CD4-positive, alpha-beta memory T cell (primary cell): ENCODE measurements at regions of chr2 and their contacts with region 1.

Region 1: GRCh38 chr2:102449370-102449974 is 23.6 kb upstream of the SLC9A4 start:
- DNase-seq: peak; percentile 44 to 63 (median 49)
- H3K4me3 ChIP-seq: no peak overlapping the region
- H3K4me3 Mint-ChIP-seq: no peak overlapping the region
- H3K27ac ChIP-seq: no peak overlapping the region
- H3K27ac Mint-ChIP-seq: no peak overlapping the region
- H3K4me1 ChIP-seq: no peaks in the 10 kb centered on the region
- H3K4me1 Mint-ChIP-seq: peaks cover 0 to 2% (median 0%) of the 10 kb centered on the region in 4 donors
- H3K27me3 ChIP-seq: no peaks in the 10 kb centered on the region
- H3K27me3 Mint-ChIP-seq: no peaks in the 10 kb centered on the region

Region 2: GRCh38 chr2:101883863-101884262 is 565.6 kb before region 1 on chr2:
- CTCF ChIA-PET with region 1: interaction called, 4 read pairs
- POLR2A ChIA-PET with region 1: no interaction called
- intact Hi-C with region 1: loop called (anchors 2 kb)
- DNase-seq: peak in 4 of 5 donors; percentile 25 to 37 (median 32)
- H3K4me3 ChIP-seq: no peak overlapping the region
- H3K4me3 Mint-ChIP-seq: no peak overlapping the region
- H3K27ac ChIP-seq: no peak overlapping the region
- H3K27ac Mint-ChIP-seq: peak overlapping the region in 3 of 7 donors; percentile 1 to 34 (median 22)
- H3K4me1 ChIP-seq: no peaks in the 10 kb centered on the region
- H3K4me1 Mint-ChIP-seq: peaks cover 0 to 3% (median 0%) of the 10 kb centered on the region in 4 donors
- H3K27me3 ChIP-seq: no peaks in the 10 kb centered on the region
- H3K27me3 Mint-ChIP-seq: no peaks in the 10 kb centered on the region

Region 3: GRCh38 chr2:102005989-102006885 is 443.2 kb before region 1 on chr2:
- CTCF ChIA-PET with region 1: interaction called, 5 read pairs
- POLR2A ChIA-PET with region 1: no interaction called
- intact Hi-C with region 1: loop called (anchors 1 kb)
- DNase-seq: peak in 2 of 5 donors; percentile 22 to 28
- H3K4me3 ChIP-seq: no peak overlapping the region
- H3K4me3 Mint-ChIP-seq: peak overlapping the region in 3 of 8 donors; percentile 3 to 43 (median 4)
- H3K27ac ChIP-seq: no peak overlapping the region
- H3K27ac Mint-ChIP-seq: no peak overlapping the region
- H3K4me1 ChIP-seq: peaks cover 7% of the 10 kb centered on the region
- H3K4me1 Mint-ChIP-seq: peaks cover 3 to 8% (median 7%) of the 10 kb centered on the region in 4 donors
- H3K27me3 ChIP-seq: no peaks in the 10 kb centered on the region
- H3K27me3 Mint-ChIP-seq: peaks cover 3 to 4% of the 10 kb centered on the region in 2 donors

Region 4: GRCh38 chr2:102166189-102166845 is 283.2 kb before region 1 on chr2:
- CTCF ChIA-PET with region 1: no interaction called
- POLR2A ChIA-PET with region 1: no interaction called
- intact Hi-C with region 1: no loop called
- DNase-seq: no peak
- H3K4me3 ChIP-seq: no peak overlapping the region
- H3K4me3 Mint-ChIP-seq: no peak overlapping the region
- H3K27ac ChIP-seq: no peak overlapping the region
- H3K27ac Mint-ChIP-seq: no peak overlapping the region
- H3K4me1 ChIP-seq: no peaks in the 10 kb centered on the region
- H3K4me1 Mint-ChIP-seq: no peaks in the 10 kb centered on the region
- H3K27me3 ChIP-seq: no peaks in the 10 kb centered on the region
- H3K27me3 Mint-ChIP-seq: no peaks in the 10 kb centered on the region

Region 5: DNA sequence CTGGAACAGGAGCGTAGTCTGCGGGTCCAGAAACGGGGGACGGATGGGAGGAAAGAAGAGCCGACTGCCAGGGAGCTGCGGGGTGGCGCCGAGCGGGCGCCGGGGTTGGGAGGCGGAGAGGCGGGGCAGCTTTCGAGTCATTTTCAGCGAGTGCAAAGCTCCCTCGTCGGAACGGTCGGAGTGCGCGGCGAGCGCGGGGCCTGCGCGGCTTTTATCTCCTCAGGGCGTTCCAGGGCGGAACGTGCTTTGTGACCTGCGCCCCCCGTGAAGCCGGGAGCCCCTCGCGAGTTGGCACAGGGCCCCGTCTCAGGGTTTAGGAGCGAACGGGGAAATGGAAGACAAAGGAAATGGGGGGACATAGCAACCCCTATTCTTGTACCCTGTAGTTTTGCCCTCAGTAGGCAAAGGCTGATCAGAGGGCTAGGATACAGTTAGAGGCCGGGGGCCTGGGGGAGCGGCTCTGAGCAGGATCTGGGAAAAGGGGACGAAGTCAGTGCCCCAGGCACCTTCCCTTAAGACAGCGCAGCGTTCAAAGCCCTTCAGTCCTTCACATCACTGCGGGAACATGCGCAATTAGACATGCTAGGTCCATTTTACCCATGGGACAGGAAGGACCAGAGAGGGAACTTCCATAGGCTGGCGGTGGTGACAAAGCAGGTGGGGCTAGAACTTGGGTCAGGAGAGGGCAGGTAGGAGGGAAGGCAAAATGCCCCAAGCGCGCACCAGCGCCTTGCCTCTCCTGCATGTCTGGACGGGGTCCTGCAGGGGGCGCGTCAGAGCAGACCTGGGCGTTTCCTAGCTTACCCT is 198.2 kb before region 1 on chr2:
- CTCF ChIA-PET with region 1: interaction called, 38 read pairs
- POLR2A ChIA-PET with region 1: no interaction called
- intact Hi-C with region 1: no loop called
- DNase-seq: peak; percentile 50 to 58 (median 54)
- H3K4me3 ChIP-seq: peak overlapping the region; percentile 80 to 86
- H3K4me3 Mint-ChIP-seq: peak overlapping the region; percentile 90 to 99 (median 95)
- H3K27ac ChIP-seq: no peak overlapping the region
- H3K27ac Mint-ChIP-seq: peak overlapping the region; percentile 18 to 94 (median 78)
- H3K4me1 ChIP-seq: peaks cover 12% of the 10 kb centered on the region
- H3K4me1 Mint-ChIP-seq: peaks cover 14 to 39% (median 23%) of the 10 kb centered on the region in 4 donors
- H3K27me3 ChIP-seq: no peaks in the 10 kb centered on the region
- H3K27me3 Mint-ChIP-seq: peaks cover 0 to 2% of the 10 kb centered on the region in 2 donors

Region 6: DNA sequence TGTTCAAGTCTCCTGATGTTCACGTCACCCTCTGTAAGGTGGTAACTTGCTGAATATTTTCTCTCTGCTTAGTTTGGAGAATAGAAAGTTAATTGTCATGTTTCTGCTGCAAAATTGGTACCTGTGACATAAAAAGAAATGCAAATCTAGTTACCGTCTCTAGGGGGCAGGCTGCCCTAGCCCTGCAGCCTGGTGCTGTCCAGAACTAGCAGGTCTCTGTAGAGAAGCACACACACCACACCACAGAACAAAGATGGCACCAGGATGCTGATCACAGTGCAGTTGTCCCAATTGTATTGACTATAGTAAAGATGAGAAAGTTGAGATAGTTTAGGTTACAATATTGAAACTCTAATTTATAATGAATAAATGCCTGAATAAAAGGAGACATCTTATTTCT is 70.6 kb after region 1 on chr2:
- CTCF ChIA-PET with region 1: no interaction called
- POLR2A ChIA-PET with region 1: no interaction called
- intact Hi-C with region 1: no loop called
- DNase-seq: no peak
- H3K4me3 ChIP-seq: no peak overlapping the region
- H3K4me3 Mint-ChIP-seq: no peak overlapping the region
- H3K27ac ChIP-seq: no peak overlapping the region
- H3K27ac Mint-ChIP-seq: no peak overlapping the region
- H3K4me1 ChIP-seq: no peaks in the 10 kb centered on the region
- H3K4me1 Mint-ChIP-seq: peaks cover 0 to 5% (median 3%) of the 10 kb centered on the region in 4 donors
- H3K27me3 ChIP-seq: no peaks in the 10 kb centered on the region
- H3K27me3 Mint-ChIP-seq: peaks cover 0 to 6% of the 10 kb centered on the region in 2 donors

Region 7: DNA sequence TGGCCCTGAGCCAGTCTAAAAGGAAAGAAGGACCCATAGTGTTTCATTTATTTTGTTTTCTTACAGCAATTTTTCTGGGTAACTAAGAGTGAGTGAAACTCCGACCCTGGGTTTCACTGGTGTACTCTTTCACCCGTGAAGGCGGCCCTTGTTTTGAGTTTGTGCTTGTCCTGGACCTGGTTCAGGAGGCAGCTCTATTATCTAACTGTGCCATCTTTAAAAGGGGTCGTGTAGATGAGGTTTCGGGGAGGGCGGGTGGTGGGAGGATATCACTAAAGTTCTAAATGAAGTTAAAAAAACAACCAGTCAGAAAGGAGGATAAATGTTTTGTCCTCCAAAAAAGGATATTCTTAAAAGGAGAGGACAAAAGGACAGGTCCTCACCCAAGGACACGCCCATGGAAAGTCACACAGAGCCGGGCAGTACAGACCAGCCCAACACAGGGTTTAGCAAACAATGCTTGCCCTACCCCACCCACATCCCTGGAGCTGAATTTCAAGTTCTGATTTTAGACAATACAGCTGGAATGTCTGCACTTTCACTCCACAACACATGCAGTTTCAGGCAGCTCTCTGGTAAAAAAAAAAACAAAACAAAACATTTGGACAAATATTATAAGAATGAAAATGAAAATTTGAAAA is 91.3 kb after region 1 on chr2:
- CTCF ChIA-PET with region 1: no interaction called
- POLR2A ChIA-PET with region 1: no interaction called
- intact Hi-C with region 1: no loop called
- DNase-seq: no peak
- H3K4me3 ChIP-seq: no peak overlapping the region
- H3K4me3 Mint-ChIP-seq: no peak overlapping the region
- H3K27ac ChIP-seq: no peak overlapping the region
- H3K27ac Mint-ChIP-seq: no peak overlapping the region
- H3K4me1 ChIP-seq: no peaks in the 10 kb centered on the region
- H3K4me1 Mint-ChIP-seq: no peaks in the 10 kb centered on the region
- H3K27me3 ChIP-seq: peaks cover 3% of the 10 kb centered on the region
- H3K27me3 Mint-ChIP-seq: peaks cover 5 to 10% of the 10 kb centered on the region in 2 donors